ENCODE measurements at regions of chr3 and their contacts with region 1.

Region 1: GRCh38 chr3:169542331-169542751 is 121.2 kb downstream of the MECOM start:
- DNase-seq: no peak
- ATAC-seq: no peak
- H3K4me3 ChIP-seq: no peak overlapping the region
- H3K27ac ChIP-seq: no peak overlapping the region
- H3K4me1 ChIP-seq: no peaks in the 10 kb centered on the region
- H3K27me3 ChIP-seq: no peaks in the 10 kb centered on the region
- CTCF ChIP-seq: no peak

Region 2: GRCh38 chr3:168336276-168336675 is 1206.1 kb before region 1 on chr3:
- intact Hi-C with region 1: no loop called
- DNase-seq: no peak
- ATAC-seq: no peak
- H3K4me3 ChIP-seq: no peak overlapping the region
- H3K27ac ChIP-seq: no peak overlapping the region
- H3K4me1 ChIP-seq: no peaks in the 10 kb centered on the region
- H3K27me3 ChIP-seq: no peaks in the 10 kb centered on the region
- CTCF ChIP-seq: no peak

Region 3: GRCh38 chr3:169512991-169513390 is 29.4 kb before region 1 on chr3:
- intact Hi-C with region 1: loop called in 1 of 2 experiments (anchors 1 kb)
- DNase-seq: no peak
- ATAC-seq: no peak
- H3K4me3 ChIP-seq: no peak overlapping the region
- H3K27ac ChIP-seq: no peak overlapping the region
- H3K4me1 ChIP-seq: no peaks in the 10 kb centered on the region
- H3K27me3 ChIP-seq: no peaks in the 10 kb centered on the region
- CTCF ChIP-seq: no peak

Region 4: DNA sequence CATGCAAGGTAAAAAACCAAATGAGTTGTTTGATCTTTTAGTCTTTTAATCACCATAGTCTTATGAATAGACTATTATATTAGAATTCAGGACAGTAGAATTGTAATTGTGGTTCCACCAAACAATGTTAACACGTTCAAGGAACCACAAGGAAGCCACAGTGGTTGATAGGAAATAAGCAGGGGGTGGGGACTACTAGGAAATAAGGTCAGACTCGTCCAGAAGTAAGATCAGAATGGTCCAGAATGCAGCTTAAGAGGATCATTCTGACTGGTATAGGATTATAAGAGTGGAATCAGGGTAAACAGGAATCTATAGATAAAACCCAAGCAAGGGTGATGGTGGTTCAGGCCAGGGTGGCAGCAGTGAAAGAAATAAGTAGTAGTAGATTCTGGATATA is 238.4 kb after region 1 on chr3:
- intact Hi-C with region 1: no loop called
- DNase-seq: no peak
- ATAC-seq: no peak
- H3K4me3 ChIP-seq: no peak overlapping the region
- H3K27ac ChIP-seq: no peak overlapping the region
- H3K4me1 ChIP-seq: peaks cover 13% of the 10 kb centered on the region
- H3K27me3 ChIP-seq: no peaks in the 10 kb centered on the region
- CTCF ChIP-seq: no peak